Adrenal gland (tissue), 19 donors: ENCODE measurements at regions of chr10 and their contacts with region 1.

Region 1: DNA sequence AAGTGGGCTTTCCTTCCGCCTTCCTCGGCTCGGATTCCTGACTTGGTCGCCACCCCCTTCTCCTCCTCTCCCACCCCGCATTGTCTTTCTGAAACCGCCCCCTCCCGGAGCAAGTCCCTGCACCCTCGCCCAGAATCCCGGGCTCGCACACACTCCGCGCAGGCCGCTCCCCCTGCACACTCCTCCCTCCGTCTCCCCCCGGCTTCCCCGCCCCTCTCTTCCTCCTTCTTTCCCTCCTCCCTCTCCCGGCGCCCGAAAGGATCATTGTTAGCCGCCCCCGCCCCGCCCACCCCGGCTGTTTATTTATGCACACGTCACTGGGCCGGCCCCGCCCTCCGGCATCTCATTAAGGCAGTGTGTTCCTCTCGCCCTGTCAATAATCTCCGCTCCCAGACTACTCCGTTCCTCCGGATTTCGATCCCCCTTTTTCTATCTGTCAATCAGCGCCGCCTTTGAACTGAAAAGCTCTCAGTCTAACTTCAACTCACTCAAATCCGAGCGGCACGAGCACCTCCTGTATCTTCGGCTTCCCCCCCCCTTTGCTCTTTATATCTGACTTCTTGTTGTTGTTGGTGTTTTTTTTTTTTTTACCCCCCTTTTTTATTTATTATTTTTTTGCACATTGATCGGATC is at the start of gene TCF7L2:
- DNase-seq: peak; percentile 94 to 98 (median 97)
- H3K4me3 ChIP-seq: peak within 1 kb of the TSS in 3 of 4 donors; percentile 50 to 83 (median 77)
- H3K27ac ChIP-seq: peak within 1 kb of the TSS; percentile 52 to 97 (median 88)
- H3K4me1 ChIP-seq: peaks cover 12 to 29% of the 10 kb centered on the region in 2 donors
- H3K27me3 ChIP-seq: no peaks in the 10 kb centered on the region
- CTCF ChIP-seq: no peak
- POLR2A ChIP-seq: peak in 1 of 2 donors; percentile 84
- total RNA-seq, gene TCF7L2: 8.7 to 24.7 (median 13.0) TPM

Region 2: GRCh38 chr10:113126229-113127201 is 176.5 kb after region 1 on chr10:
- intact Hi-C with region 1: loop called in 1 of 2 experiments (anchors 10 kb)
- DNase-seq: peak; percentile 61 to 81 (median 74)
- H3K4me3 ChIP-seq: peak overlapping the region in 1 of 4 donors; percentile 58
- H3K27ac ChIP-seq: no peak overlapping the region
- H3K4me1 ChIP-seq: peaks cover 0 to 25% of the 10 kb centered on the region in 2 donors
- H3K27me3 ChIP-seq: no peaks in the 10 kb centered on the region
- CTCF ChIP-seq: peak in 3 of 6 experiments; percentile 80 to 94 (median 91)
- POLR2A ChIP-seq: no peak

Region 3: DNA sequence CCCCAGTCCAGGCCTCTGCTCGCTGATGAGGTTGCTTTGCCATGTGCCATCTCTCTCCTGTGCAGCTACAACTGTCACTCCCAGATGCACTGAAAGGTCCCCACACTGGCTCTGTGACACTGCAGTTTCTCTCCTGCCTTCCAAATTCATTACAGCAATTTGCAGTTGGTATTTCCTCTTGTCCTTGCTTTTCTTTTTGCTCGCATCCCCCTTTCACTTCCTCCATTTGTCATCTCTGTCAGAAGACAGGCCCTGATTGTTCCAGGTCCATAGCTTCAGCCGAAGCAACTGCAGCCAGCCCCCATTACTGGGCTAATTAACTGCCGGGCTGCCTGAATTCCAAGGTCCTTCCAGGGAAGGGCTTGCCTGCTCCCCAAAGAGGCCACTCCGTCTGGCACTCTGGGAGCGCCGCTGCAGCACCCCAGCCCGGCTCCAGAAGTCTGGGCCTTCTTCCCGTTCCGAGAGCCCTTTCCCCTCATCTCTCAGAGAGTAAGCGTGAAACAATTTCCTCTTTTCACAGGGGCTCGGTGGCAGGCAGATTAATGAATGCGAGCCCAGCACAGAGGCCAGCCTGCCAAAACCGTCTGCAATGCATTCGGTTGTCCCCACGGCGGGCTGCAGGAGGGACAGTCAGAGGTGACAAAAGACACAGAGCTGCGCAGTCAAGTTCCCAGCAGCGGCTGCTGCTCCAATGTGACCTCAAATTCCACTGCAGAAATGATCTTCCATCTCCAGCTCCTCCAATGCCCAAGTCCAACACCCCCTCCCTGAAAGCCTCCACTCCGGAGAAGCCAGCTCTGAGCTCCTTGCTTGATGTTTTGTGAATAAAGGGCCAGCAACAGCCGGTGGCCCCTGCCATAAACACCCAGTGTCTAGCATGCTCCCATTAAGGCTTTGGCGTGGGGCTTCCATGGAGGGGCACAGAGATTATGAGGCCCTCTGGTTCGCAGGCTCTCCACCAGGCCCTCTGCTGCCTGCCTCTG is 323.5 kb after region 1 on chr10:
- intact Hi-C with region 1: no loop called
- DNase-seq: peak in 6 of 7 donors; percentile 23 to 68 (median 45)
- H3K4me3 ChIP-seq: no peak overlapping the region
- H3K27ac ChIP-seq: peak overlapping the region in 3 of 5 donors; percentile 22 to 82 (median 37)
- H3K4me1 ChIP-seq: peaks cover 0 to 6% of the 10 kb centered on the region in 2 donors
- H3K27me3 ChIP-seq: no peaks in the 10 kb centered on the region
- CTCF ChIP-seq: no peak
- POLR2A ChIP-seq: no peak